Natural killer cell (primary cell): ENCODE measurements at regions of chr19 and their contacts with region 1.

Region 1: GRCh38 chr19:13334801-13335481 is 171.3 kb downstream of the CACNA1A start:
- DNase-seq: no peak
- ATAC-seq: no peak
- H3K4me3 ChIP-seq: no peak overlapping the region
- H3K4me3 Mint-ChIP-seq: no peak overlapping the region
- H3K27ac ChIP-seq: no peak overlapping the region
- H3K27ac Mint-ChIP-seq: no peak overlapping the region
- H3K4me1 ChIP-seq: no peaks in the 10 kb centered on the region
- H3K4me1 Mint-ChIP-seq: no peaks in the 10 kb centered on the region
- H3K27me3 ChIP-seq: no peaks in the 10 kb centered on the region
- H3K27me3 Mint-ChIP-seq: peaks cover 0 to 8% of the 10 kb centered on the region in 2 donors
- CTCF ChIP-seq: no peak

Region 2: GRCh38 chr19:13309853-13310252 is 25.1 kb before region 1 on chr19:
- intact Hi-C with region 1: loop called (anchors 2 kb)
- DNase-seq: no peak
- ATAC-seq: no peak
- H3K4me3 ChIP-seq: no peak overlapping the region
- H3K4me3 Mint-ChIP-seq: no peak overlapping the region
- H3K27ac ChIP-seq: no peak overlapping the region
- H3K27ac Mint-ChIP-seq: no peak overlapping the region
- H3K4me1 ChIP-seq: no peaks in the 10 kb centered on the region
- H3K4me1 Mint-ChIP-seq: no peaks in the 10 kb centered on the region
- H3K27me3 ChIP-seq: no peaks in the 10 kb centered on the region
- H3K27me3 Mint-ChIP-seq: peaks cover 3 to 7% of the 10 kb centered on the region in 2 donors
- CTCF ChIP-seq: no peak

Region 3: GRCh38 chr19:13356686-13357280 is 21.8 kb after region 1 on chr19:
- intact Hi-C with region 1: no loop called
- DNase-seq: no peak
- ATAC-seq: no peak
- H3K4me3 ChIP-seq: no peak overlapping the region
- H3K4me3 Mint-ChIP-seq: no peak overlapping the region
- H3K27ac ChIP-seq: no peak overlapping the region
- H3K27ac Mint-ChIP-seq: no peak overlapping the region
- H3K4me1 ChIP-seq: no peaks in the 10 kb centered on the region
- H3K4me1 Mint-ChIP-seq: no peaks in the 10 kb centered on the region
- H3K27me3 ChIP-seq: no peaks in the 10 kb centered on the region
- H3K27me3 Mint-ChIP-seq: peaks cover 11 to 22% of the 10 kb centered on the region in 2 donors
- CTCF ChIP-seq: no peak